ENCODE measurements at regions of chr6 and their contacts with region 1.

Region 1: DNA sequence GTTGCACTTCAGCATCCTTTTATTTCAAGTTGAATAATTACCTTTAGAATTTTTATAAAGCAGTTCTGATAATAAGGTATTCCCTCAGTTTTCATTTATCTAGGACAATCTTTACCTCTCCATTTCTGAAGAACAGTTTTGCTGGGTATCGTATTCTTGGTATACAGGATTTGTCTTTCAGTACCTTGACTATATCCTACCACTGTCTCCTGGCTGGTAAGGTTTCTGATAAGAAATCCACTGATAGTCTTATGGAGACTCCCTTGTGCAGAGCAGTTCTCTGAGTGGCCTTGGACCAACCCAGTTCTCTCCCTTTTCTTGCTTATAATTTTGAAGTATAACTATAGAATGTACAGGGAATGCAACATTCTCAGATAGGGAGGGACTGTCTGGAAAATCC is 51.3 kb upstream of the SAMD3 start:
- DNase-seq: no peak
- H3K4me3 ChIP-seq: no peak overlapping the region
- H3K27me3 ChIP-seq: no peaks in the 10 kb centered on the region
- CTCF ChIP-seq: no peak

Region 2: GRCh38 chr6:130252527-130253237 is 21.3 kb before region 1 on chr6:
- CTCF ChIA-PET with region 1: no interaction called
- POLR2A ChIA-PET with region 1: no interaction called
- DNase-seq: no peak
- H3K4me3 ChIP-seq: no peak overlapping the region
- H3K27me3 ChIP-seq: no peaks in the 10 kb centered on the region
- CTCF ChIP-seq: no peak

Region 3: GRCh38 chr6:130303431-130303830 is 29.4 kb after region 1 on chr6:
- CTCF ChIA-PET with region 1: no interaction called
- POLR2A ChIA-PET with region 1: interaction called, 10 read pairs
- DNase-seq: peak; percentile 52
- H3K4me3 ChIP-seq: no peak overlapping the region
- H3K27me3 ChIP-seq: no peaks in the 10 kb centered on the region
- CTCF ChIP-seq: no peak